H1 (cell line): ENCODE measurements at regions of chr17 and their contacts with region 1.

Region 1: GRCh38 chr17:77542551-77543490 is 402.1 kb downstream of the SEC14L1 start:
- DNase-seq: peak; percentile 63 to 79
- H3K4me3 ChIP-seq: no peak overlapping the region
- H3K27ac ChIP-seq: no peak overlapping the region
- H3K4me1 ChIP-seq: peaks cover 2 to 21% (median 16%) of the 10 kb centered on the region in 4 experiments
- H3K27me3 ChIP-seq: peaks cover 0 to 7% (median 2%) of the 10 kb centered on the region in 4 experiments; a peak in 3 of 7 replicates
- CTCF ChIP-seq: peak; percentile 80 to 91 (median 90)
- EP300 ChIP-seq: no peak
- POLR2A ChIP-seq: no peak
- RAD21 ChIP-seq: peak; percentile 98

Region 2: DNA sequence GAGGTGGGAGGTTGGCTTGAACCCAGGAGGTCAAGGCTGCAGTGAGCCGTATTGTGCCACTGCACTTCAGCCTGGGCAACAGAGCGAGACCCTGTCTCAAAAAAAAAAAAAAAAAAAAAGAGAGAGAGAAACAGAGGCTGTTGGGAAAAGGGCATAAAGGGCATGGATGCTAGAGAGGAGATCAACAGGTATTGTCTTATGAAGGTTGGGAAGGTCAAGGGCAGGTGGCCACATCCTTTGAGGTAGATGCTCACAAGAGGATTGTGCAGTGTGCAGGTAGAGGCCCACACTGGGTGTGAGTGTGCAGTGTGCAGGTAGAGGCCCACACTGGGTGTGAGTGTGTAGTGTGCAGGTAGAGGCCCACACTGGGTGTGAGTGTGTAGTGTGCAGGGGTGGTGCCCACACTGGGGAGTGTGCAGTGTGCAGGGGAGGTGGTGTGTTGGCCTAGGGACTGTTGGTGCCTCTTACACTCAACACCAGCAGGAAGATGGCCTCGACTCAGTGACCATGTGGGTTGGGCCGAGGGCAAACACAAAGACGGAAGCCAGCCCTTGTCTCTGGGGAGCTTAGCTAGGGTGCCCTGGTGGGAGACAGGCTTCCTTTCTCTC is 10.7 kb after region 1 on chr17:
- CTCF ChIA-PET with region 1: interaction called, 19 read pairs
- POLR2A ChIA-PET with region 1: interaction called, 6 read pairs
- DNase-seq: no peak
- H3K4me3 ChIP-seq: no peak overlapping the region
- H3K27ac ChIP-seq: no peak overlapping the region
- H3K4me1 ChIP-seq: peaks cover 0 to 7% (median under 1%) of the 10 kb centered on the region in 4 experiments; a peak in 2 of 7 replicates
- H3K27me3 ChIP-seq: no peaks in the 10 kb centered on the region; a peak in 1 of 7 replicates
- CTCF ChIP-seq: no peak
- EP300 ChIP-seq: no peak
- POLR2A ChIP-seq: no peak
- RAD21 ChIP-seq: no peak

Region 3: GRCh38 chr17:77735566-77736198 is 192.9 kb after region 1 on chr17:
- CTCF ChIA-PET with region 1: interaction called, 13 read pairs
- POLR2A ChIA-PET with region 1: no interaction called
- DNase-seq: no peak
- H3K4me3 ChIP-seq: peak overlapping the region in 1 of 4 experiments; percentile 8; a peak in 1 of 8 replicates
- H3K27ac ChIP-seq: no peak overlapping the region
- H3K4me1 ChIP-seq: peaks cover 0 to 14% (median 12%) of the 10 kb centered on the region in 4 experiments; a peak in 6 of 7 replicates
- H3K27me3 ChIP-seq: peaks cover 0 to 41% (median 33%) of the 10 kb centered on the region in 4 experiments; a peak in 4 of 7 replicates
- CTCF ChIP-seq: no peak
- EP300 ChIP-seq: no peak
- POLR2A ChIP-seq: no peak
- RAD21 ChIP-seq: no peak